ENCODE measurements at regions of chr12 and their contacts with region 1.

Region 1: DNA sequence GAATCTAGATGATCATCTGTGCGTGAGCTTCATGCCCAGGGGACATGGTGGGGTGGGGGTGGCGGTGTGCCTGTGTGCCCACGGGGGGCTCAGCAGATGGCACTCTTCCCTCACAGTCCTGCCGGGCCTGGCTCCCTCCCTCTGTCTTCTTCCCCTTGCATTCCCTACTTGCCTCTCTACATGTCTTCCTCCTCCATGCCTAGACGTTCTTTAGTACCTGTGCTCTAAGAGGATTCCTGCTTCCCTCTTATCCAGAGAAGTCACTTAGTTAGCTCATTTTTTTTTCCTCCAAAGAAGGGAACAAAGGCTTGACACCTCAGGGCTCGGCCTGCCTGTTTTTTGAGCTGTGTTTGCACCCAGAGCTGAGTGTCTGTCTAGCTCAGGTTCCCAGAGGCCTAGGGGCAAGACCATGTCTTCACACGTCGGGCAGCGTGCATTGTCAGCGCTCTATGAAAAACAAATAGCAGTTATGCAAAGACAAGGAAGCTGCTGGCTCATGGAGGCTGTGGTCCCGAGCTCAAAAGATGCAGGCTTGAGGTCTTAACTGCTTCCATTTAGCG is 48.8 kb downstream of the NINJ2 start:
- DNase-seq: peak; percentile 67
- H3K4me3 Mint-ChIP-seq: no peak overlapping the region
- H3K27ac Mint-ChIP-seq: no peak overlapping the region
- H3K4me1 Mint-ChIP-seq: peaks cover 49% of the 10 kb centered on the region
- H3K27me3 Mint-ChIP-seq: no peaks in the 10 kb centered on the region

Region 2: DNA sequence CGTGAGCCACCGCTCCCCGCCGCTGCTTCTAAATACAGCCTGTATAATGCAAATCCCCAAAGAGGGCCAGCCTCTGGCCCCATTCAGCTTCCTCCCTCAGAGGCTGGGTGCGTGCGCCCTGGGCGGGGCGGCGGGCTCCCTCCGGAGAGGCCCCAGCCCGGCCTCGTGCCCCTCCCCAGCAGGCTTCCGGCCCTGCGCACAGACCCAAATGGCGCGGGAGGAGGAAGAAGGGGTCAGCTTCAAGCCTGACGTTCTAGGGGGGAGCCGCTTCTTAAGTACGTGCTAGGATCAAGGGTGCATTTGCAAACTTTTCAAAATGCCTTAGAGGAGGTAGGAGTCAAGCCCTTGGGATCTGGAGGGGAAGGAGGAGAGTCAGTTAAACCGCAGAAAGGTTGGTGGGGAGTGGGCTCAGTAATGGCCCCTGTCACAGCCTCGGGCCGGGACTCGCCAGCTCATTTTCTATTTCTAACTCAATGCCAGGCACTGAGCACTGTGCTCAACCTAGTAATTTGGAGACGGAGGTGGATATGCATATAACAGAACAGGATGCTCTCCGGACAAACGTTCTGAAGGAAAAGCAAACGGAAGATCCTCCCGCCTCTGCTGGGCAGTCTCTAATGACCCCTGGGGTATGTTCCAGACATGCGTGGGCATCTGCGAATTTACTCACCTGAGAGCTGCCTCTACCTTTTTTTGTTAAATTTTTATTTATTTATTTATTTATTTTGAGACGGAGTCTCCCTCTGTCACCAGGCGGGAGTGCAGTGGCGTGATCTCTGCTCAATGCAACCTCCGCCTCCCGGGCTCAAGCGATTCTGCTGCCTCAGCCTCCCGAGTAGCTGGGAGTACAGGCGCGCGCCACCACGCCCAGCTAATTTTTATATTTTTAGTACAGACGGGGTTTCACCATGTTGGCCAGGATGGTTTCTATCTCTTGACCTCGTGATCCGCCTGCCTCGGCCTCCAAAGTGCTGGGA is 16.5 kb after region 1 on chr12:
- intact Hi-C with region 1: loop called (anchors 2 kb)
- DNase-seq: peak; percentile 96
- H3K4me3 Mint-ChIP-seq: peak overlapping the region; percentile 93
- H3K27ac Mint-ChIP-seq: peak overlapping the region; percentile 99
- H3K4me1 Mint-ChIP-seq: peaks cover 42% of the 10 kb centered on the region
- H3K27me3 Mint-ChIP-seq: no peaks in the 10 kb centered on the region

Region 3: GRCh38 chr12:642633-643474 is 28.4 kb after region 1 on chr12:
- intact Hi-C with region 1: loop called (anchors 2 kb)
- DNase-seq: peak; percentile 94
- H3K4me3 Mint-ChIP-seq: peak overlapping the region; percentile 86
- H3K27ac Mint-ChIP-seq: peak overlapping the region; percentile 92
- H3K4me1 Mint-ChIP-seq: peaks cover 57% of the 10 kb centered on the region
- H3K27me3 Mint-ChIP-seq: no peaks in the 10 kb centered on the region

Region 4: GRCh38 chr12:662566-663292 is 48.2 kb after region 1 on chr12:
- intact Hi-C with region 1: loop called (anchors 10 kb)
- DNase-seq: no peak
- H3K4me3 Mint-ChIP-seq: peak overlapping the region; percentile 77
- H3K27ac Mint-ChIP-seq: peak overlapping the region; percentile 92
- H3K4me1 Mint-ChIP-seq: peaks cover 46% of the 10 kb centered on the region
- H3K27me3 Mint-ChIP-seq: no peaks in the 10 kb centered on the region

Measured in activated CD4-positive, alpha-beta T cell treated with anti-CD3 and anti-CD28 coated beads, Interleukin-2, amount 10 ng/mL, durations not matched to agents 24 days and 14 days (primary cell).